ENCODE measurements at regions of chr12 and their contacts with region 1.

Region 1: GRCh38 chr12:124774462-124775167 is 89.0 kb downstream of the SCARB1 start:
- DNase-seq: peak; percentile 48
- ATAC-seq: peak; percentile 87
- H3K4me3 Mint-ChIP-seq: peak overlapping the region; percentile 74
- H3K27ac Mint-ChIP-seq: peak overlapping the region; percentile 97
- H3K4me1 Mint-ChIP-seq: peaks cover 47% of the 10 kb centered on the region
- H3K27me3 Mint-ChIP-seq: peaks cover 7% of the 10 kb centered on the region
- CTCF ChIP-seq: no peak

Region 2: DNA sequence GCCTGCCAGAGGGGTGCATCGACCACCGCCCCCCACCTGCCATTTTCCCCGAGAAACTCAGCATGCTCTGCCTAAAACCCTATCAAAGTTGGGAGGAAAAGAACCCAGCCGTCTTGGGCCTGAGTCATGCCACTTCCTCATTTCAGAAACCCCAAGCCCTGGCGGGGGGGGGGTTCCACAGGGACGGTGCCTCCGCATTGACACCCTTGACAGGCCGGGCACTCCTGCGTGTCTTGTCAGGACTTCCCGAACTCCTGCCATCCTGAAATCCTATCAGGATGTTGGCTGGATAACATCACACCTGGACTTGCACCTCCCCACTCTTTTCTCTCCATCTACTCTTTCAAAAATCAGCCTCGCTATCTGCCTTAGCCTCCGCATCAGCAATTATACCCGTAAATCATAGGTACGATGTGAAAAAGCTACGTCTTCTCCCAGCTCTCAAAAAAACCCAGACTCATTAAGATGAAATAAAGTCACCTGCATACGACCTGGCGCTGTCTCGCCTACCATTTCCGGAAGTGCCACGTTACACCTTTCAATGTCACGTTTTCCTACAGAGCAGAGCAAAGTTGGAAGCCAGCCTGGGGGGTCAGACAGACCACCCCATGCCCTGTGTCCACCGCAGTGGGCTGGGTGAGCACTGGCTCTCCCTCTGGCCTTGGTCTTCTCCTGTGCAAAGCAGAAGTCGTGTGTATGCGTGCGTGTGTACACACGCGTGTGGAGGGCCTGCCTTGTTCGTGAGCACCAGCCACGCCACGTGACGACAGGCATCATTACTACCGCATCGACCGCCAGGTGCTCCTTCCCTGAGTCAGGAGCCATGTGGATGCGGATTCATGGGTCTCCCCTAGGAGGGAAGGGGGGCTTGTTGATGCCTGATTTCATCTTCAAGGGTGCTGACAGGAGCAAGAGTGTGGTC is 383.0 kb before region 1 on chr12:
- CTCF ChIA-PET with region 1: interaction called, 3 read pairs
- POLR2A ChIA-PET with region 1: interaction called, 7 read pairs
- intact Hi-C with region 1: loop called (anchors 1 kb)
- DNase-seq: peak; percentile 73
- ATAC-seq: peak; percentile 77
- H3K4me3 Mint-ChIP-seq: peak overlapping the region; percentile 83
- H3K27ac Mint-ChIP-seq: peak overlapping the region; percentile 79
- H3K4me1 Mint-ChIP-seq: peaks cover 47% of the 10 kb centered on the region
- H3K27me3 Mint-ChIP-seq: no peaks in the 10 kb centered on the region
- CTCF ChIP-seq: no peak

Region 3: GRCh38 chr12:124477107-124477915 is 297.3 kb before region 1 on chr12:
- CTCF ChIA-PET with region 1: no interaction called
- POLR2A ChIA-PET with region 1: no interaction called
- intact Hi-C with region 1: loop called (anchors 1 kb)
- DNase-seq: no peak
- ATAC-seq: peak; percentile 68
- H3K4me3 Mint-ChIP-seq: peak overlapping the region; percentile 57
- H3K27ac Mint-ChIP-seq: peak overlapping the region; percentile 75
- H3K4me1 Mint-ChIP-seq: peaks cover 55% of the 10 kb centered on the region
- H3K27me3 Mint-ChIP-seq: no peaks in the 10 kb centered on the region
- CTCF ChIP-seq: no peak

Region 4: DNA sequence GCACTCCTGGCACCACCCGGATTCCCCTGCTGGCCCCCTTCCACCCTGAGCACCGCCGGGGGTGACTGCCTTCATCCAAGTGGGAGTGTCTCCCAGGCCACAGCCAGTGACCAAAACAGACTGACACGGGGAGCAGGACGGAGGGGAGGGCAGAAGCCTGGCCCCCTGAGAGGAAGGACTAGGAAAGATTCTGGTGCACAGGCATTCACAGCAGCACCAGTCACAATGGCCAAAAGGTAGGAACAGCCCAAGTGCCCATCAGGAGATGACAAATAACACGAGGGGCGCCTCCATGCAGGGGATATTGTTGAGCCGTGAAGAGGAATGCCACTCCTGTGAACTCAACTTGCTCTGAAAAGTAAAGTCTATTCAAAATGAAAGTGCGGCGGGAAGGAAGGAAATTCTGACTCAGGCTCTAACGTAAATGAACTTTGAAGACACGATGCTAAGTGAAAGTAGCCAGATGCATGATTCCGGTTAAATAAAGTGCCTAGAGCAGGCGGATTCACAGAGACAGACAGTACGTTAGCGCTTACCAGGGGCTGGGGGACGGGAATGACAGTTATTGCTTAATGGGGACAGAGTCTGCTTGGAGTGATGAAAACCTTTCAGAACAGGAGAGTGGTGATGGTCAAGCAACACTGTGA is 61.1 kb before region 1 on chr12:
- CTCF ChIA-PET with region 1: no interaction called
- POLR2A ChIA-PET with region 1: no interaction called
- intact Hi-C with region 1: loop called (anchors 1 kb)
- DNase-seq: peak; percentile 46
- ATAC-seq: peak; percentile 90
- H3K4me3 Mint-ChIP-seq: peak overlapping the region; percentile 52
- H3K27ac Mint-ChIP-seq: peak overlapping the region; percentile 77
- H3K4me1 Mint-ChIP-seq: peaks cover 19% of the 10 kb centered on the region
- H3K27me3 Mint-ChIP-seq: no peaks in the 10 kb centered on the region
- CTCF ChIP-seq: no peak

Region 5: DNA sequence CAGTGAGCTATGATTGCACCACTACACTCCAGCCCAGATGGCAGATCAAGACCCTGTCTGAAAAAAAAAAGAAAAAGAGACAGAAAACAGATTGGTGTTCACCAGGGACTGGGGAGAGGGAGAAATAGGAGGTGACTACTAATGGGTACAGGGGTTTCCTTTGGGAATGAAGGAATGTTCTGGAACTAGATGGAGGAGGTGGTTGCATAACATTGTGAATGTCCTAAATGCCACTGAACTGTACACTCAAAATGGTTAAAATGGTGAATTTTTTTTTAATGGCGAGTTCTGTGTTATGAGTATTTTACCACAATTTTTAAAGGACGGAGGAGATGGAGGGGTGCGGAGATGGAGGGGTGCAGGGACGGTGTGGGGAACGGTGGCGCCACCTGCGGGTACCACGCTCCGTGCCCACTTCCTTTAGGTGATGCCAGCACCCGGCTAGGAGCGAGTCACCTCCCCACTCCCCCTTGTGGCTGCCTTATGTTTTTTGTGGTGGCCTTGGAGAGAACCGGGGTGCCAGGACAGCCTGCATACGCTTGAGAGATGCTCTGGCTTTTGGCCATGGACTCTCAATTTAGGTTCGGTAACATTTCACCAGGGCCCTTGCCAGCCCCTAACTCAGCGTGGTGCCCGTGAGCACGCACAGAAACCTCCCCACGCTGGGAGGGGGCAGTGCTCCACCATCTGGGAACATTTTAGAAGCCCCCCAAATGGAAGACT is 123.7 kb after region 1 on chr12:
- CTCF ChIA-PET with region 1: interaction called, 3 read pairs
- POLR2A ChIA-PET with region 1: interaction called, 3 read pairs
- intact Hi-C with region 1: loop called (anchors 1 kb)
- DNase-seq: peak; percentile 55
- ATAC-seq: peak; percentile 81
- H3K4me3 Mint-ChIP-seq: peak overlapping the region; percentile 29
- H3K27ac Mint-ChIP-seq: no peak overlapping the region
- H3K4me1 Mint-ChIP-seq: peaks cover 45% of the 10 kb centered on the region
- H3K27me3 Mint-ChIP-seq: no peaks in the 10 kb centered on the region
- CTCF ChIP-seq: peak; percentile 33

Region 6: GRCh38 chr12:124940549-124941527 is 166.2 kb after region 1 on chr12:
- CTCF ChIA-PET with region 1: interaction called, 5 read pairs
- POLR2A ChIA-PET with region 1: interaction called, 3 read pairs
- intact Hi-C with region 1: loop called (anchors 1 kb)
- DNase-seq: peak; percentile 62
- ATAC-seq: peak; percentile 60
- H3K4me3 Mint-ChIP-seq: no peak overlapping the region
- H3K27ac Mint-ChIP-seq: no peak overlapping the region
- H3K4me1 Mint-ChIP-seq: peaks cover 15% of the 10 kb centered on the region
- H3K27me3 Mint-ChIP-seq: no peaks in the 10 kb centered on the region
- CTCF ChIP-seq: no peak